ENCODE measurements at regions of chr1 and their contacts with region 1.

Region 1: DNA sequence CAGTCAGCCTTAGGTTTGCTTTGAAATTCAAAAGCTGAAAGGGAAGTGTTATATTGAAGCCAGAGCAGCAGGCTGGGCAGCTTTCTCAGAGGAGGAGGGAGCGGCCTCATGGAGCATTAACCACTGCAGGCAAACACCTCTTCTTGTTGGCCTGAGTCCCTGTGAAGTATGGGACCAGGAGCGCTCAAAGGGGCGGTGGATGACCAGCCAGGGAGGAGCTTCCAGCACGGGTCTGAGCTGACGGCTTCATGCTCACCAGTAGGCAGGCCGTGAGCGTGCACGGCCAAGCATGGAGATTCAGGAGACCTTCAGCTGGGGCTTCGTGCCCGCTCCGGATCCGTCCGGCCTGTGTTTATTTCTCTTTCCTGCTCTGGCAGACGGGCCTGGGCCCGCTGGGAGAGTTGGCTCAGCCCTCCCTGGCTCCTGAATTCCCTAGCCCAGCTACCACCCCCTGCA is 245.2 kb downstream of the TRABD2B start:
- DNase-seq: no peak
- H3K4me3 ChIP-seq: no peak overlapping the region
- H3K27ac ChIP-seq: no peak overlapping the region
- H3K4me1 ChIP-seq: no peaks in the 10 kb centered on the region
- H3K27me3 ChIP-seq: no peaks in the 10 kb centered on the region
- CTCF ChIP-seq: no peak
- EP300 ChIP-seq: no peak
- POLR2A ChIP-seq: no peak

Region 2: DNA sequence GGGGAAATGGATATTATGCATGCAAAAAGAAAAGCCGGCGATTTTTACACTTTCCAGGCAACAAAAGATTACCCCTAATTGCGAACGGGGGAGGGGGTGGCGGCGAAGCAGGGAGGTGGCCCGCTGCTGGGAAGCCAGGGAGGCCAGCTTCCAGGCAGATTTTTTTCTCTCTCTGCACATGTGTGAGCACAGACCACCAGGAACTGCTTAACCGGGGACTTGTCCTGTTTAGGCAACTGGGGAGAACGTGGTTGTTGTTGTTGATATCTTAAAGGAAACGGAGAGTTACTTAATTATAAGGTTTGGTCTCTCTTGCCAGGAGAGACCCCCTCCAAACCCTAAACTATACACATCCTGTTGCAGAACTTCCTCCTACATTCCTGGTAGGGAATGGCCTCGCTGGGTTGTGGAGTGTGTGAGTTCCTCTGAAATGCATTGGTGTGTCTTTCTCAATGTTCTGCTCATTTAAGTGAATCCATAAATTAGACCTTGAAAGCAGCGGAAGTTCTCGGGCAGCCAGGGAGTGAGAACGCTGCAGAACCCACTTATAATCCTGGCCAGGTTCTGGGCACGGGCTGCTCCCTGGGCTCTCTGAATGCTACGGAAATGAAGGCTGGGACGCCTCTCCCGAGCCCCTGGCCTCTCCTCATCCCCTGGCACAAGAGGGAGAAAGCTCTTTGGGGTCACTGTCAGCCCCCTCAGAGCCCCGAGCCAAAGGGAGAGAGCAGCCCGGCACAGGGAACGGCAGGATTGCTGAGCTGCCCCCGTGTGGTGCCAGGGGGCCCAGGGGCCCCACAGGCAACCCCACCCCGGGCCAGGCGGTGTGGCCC is 64.2 kb before region 1 on chr1:
- intact Hi-C with region 1: loop called in 1 of 4 experiments (anchors 2 kb)
- DNase-seq: no peak
- H3K4me3 ChIP-seq: no peak overlapping the region
- H3K27ac ChIP-seq: no peak overlapping the region
- H3K4me1 ChIP-seq: no peaks in the 10 kb centered on the region
- H3K27me3 ChIP-seq: no peaks in the 10 kb centered on the region
- CTCF ChIP-seq: no peak
- EP300 ChIP-seq: no peak
- POLR2A ChIP-seq: no peak

Measured in ovary (tissue), 10 donors.